CD4-positive, alpha-beta T cell (primary cell): ENCODE measurements at regions of chr2 and their contacts with region 1.

Region 1: DNA sequence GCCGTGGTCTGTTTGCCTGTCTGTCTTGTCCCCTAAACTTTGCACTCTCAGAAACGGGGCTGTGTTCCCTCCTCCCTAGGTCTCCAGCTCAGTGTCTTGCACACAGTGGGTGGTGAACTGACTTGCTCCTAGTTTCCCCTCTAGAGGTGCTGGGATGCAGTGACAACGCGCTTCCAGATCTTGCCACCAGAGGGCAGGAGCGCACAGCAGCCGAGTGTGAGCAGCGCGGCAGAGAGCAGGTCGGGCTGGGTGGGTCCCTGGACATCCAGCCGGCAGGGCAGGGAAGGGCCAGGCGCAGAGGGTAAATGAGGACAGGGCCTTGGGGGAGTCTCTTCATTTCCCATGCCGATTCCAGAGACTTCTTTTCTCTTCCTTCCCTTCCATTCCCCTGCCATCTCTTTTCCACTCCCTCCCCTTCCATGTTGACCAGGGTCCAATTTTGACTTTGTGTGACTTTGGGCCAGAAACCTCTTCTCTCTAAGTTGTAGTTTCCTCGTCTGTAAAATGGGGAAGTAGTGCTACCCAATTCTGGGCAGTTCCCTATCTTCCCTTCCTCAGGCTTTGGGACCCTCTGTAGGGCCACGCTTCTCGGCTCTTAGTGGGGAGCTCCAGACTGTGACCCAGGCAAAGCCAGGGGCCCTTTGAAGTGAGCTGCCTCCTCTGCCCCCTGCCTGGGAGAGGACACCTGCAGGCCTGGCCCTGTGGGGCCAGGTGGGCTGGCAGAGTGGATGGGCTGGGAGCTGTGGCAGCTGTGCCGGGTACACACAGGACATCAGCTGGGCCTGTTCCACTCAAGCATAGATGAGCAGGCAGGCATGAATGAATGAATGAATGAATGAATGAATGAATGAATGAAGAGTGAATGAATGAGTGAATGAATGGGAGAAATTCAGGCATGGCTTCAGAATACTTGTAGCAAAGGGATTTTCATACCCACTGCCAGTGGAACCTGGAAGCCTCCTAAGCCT is 43.3 kb upstream of the TAF1B start:
- DNase-seq: peak; percentile 69 to 91 (median 82)
- ATAC-seq: peak; percentile 90
- H3K4me3 ChIP-seq: peak overlapping the region; percentile 28
- H3K4me3 Mint-ChIP-seq: peak overlapping the region; percentile 82
- H3K27ac ChIP-seq: peak overlapping the region; percentile 20 to 31
- H3K27ac Mint-ChIP-seq: no peak overlapping the region
- H3K4me1 ChIP-seq: peaks cover 46% of the 10 kb centered on the region
- H3K4me1 Mint-ChIP-seq: peaks cover 17% of the 10 kb centered on the region
- H3K27me3 ChIP-seq: no peaks in the 10 kb centered on the region
- H3K27me3 Mint-ChIP-seq: peaks cover 5% of the 10 kb centered on the region
- CTCF ChIP-seq: peak; percentile 97

Region 2: DNA sequence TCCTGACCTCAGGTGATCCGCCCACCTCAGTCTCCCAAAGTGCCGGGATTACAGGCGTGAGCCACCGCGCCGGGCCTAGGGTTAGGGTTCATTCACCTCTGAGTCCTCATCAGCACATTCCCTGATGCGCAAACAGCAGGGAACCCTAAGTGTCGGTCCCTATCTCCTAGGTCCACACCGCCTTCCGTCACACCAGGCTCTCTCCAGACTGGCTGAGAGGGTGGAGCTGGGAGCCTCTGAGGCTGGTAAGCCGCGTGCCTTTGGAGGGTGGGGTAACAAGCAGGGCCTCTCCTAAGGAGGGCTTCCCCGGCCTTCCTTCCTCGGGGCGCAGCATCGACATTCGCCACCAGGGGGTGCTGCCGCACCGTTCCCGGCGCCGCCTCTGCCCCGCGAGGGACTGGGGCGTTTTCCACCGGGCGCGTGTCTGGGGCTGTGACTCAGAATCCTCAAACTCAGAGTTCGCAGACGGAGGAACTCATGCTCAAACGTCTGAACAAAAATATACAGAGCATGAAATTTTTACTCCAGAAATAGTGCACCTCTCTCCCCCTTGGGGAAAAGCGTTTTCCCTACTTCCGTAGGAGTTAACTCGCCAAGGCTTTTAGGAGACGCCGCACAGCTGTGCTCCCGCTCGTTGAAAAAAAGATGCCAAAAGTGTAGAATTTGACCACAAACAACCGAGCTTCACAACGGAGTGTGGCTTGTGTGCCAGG is 657.2 kb before region 1 on chr2:
- CTCF ChIA-PET with region 1: no interaction called
- POLR2A ChIA-PET with region 1: no interaction called
- intact Hi-C with region 1: loop called (anchors 5 kb)
- DNase-seq: peak; percentile 50 to 83 (median 70)
- ATAC-seq: peak; percentile 95
- H3K4me3 ChIP-seq: peak overlapping the region; percentile 20
- H3K4me3 Mint-ChIP-seq: no peak overlapping the region
- H3K27ac ChIP-seq: no peak overlapping the region
- H3K27ac Mint-ChIP-seq: no peak overlapping the region
- H3K4me1 ChIP-seq: peaks cover 7% of the 10 kb centered on the region
- H3K4me1 Mint-ChIP-seq: peaks cover 5% of the 10 kb centered on the region
- H3K27me3 ChIP-seq: peaks cover 0 to 6% of the 10 kb centered on the region in 2 experiments
- H3K27me3 Mint-ChIP-seq: peaks cover 39% of the 10 kb centered on the region
- CTCF ChIP-seq: peak; percentile 87

Region 3: GRCh38 chr2:9770308-9771100 is 29.4 kb before region 1 on chr2:
- CTCF ChIA-PET with region 1: interaction called, 11 read pairs
- POLR2A ChIA-PET with region 1: no interaction called
- intact Hi-C with region 1: no loop called
- DNase-seq: peak; percentile 23 to 78 (median 45)
- ATAC-seq: peak; percentile 60
- H3K4me3 ChIP-seq: no peak overlapping the region
- H3K4me3 Mint-ChIP-seq: no peak overlapping the region
- H3K27ac ChIP-seq: no peak overlapping the region
- H3K27ac Mint-ChIP-seq: no peak overlapping the region
- H3K4me1 ChIP-seq: peaks cover 22% of the 10 kb centered on the region
- H3K4me1 Mint-ChIP-seq: peaks cover 5% of the 10 kb centered on the region
- H3K27me3 ChIP-seq: no peaks in the 10 kb centered on the region
- H3K27me3 Mint-ChIP-seq: no peaks in the 10 kb centered on the region
- CTCF ChIP-seq: peak; percentile 39

Region 4: GRCh38 chr2:9782197-9782719 is 17.7 kb before region 1 on chr2:
- CTCF ChIA-PET with region 1: interaction called, 10 read pairs
- POLR2A ChIA-PET with region 1: no interaction called
- intact Hi-C with region 1: loop called in 1 of 2 experiments (anchors 2 kb)
- DNase-seq: peak; percentile 40 to 94 (median 64)
- ATAC-seq: peak; percentile 78
- H3K4me3 ChIP-seq: peak overlapping the region; percentile 22
- H3K4me3 Mint-ChIP-seq: peak overlapping the region; percentile 61
- H3K27ac ChIP-seq: peak overlapping the region; percentile 62 to 95
- H3K27ac Mint-ChIP-seq: peak overlapping the region; percentile 87
- H3K4me1 ChIP-seq: peaks cover 75% of the 10 kb centered on the region
- H3K4me1 Mint-ChIP-seq: peaks cover 57% of the 10 kb centered on the region
- H3K27me3 ChIP-seq: no peaks in the 10 kb centered on the region
- H3K27me3 Mint-ChIP-seq: no peaks in the 10 kb centered on the region
- CTCF ChIP-seq: no peak

Region 5: GRCh38 chr2:9813312-9814133 is 13.6 kb after region 1 on chr2:
- CTCF ChIA-PET with region 1: interaction called, 12 read pairs
- POLR2A ChIA-PET with region 1: no interaction called
- intact Hi-C with region 1: no loop called
- DNase-seq: peak; percentile 40 to 82 (median 60)
- ATAC-seq: peak; percentile 83
- H3K4me3 ChIP-seq: no peak overlapping the region
- H3K4me3 Mint-ChIP-seq: no peak overlapping the region
- H3K27ac ChIP-seq: no peak overlapping the region
- H3K27ac Mint-ChIP-seq: no peak overlapping the region
- H3K4me1 ChIP-seq: peaks cover 10% of the 10 kb centered on the region
- H3K4me1 Mint-ChIP-seq: peaks cover 25% of the 10 kb centered on the region
- H3K27me3 ChIP-seq: no peaks in the 10 kb centered on the region
- H3K27me3 Mint-ChIP-seq: peaks cover 4% of the 10 kb centered on the region
- CTCF ChIP-seq: peak; percentile 86

Region 6: DNA sequence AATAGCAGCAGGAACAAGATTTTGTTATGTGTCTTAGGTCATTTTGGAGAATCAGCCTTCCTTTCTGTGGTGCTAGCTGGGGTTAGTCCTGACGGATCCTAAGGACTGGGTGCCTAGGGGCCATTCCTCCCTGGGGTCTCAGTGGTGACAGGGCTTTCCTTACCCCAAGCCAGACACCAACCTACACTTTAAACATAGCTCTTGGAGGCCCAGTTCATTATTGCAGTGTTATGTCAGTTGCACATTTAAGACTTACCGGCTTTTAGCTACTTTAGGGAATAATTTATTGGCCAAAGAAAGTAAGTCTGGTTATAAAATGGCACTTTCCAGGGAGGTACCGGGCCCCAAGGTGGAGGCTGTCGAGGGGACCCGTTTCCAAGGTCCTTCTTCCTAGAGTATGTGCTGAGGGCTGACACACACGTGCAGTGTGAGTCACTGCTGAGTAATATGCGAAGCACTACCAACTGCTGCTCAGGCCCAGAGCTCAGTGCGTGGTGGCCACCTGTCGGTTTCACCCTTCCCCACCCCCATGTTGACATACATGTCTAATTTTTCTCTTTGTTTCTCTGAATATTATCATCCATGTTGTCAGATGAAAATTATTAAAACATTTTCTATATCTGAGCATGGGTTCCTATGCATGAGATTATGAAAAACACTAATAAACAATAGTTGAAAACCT is 114.6 kb after region 1 on chr2:
- CTCF ChIA-PET with region 1: no interaction called
- POLR2A ChIA-PET with region 1: no interaction called
- intact Hi-C with region 1: no loop called
- DNase-seq: peak in 2 of 14 experiments; percentile 13 to 22
- ATAC-seq: no peak
- H3K4me3 ChIP-seq: no peak overlapping the region
- H3K4me3 Mint-ChIP-seq: no peak overlapping the region
- H3K27ac ChIP-seq: no peak overlapping the region
- H3K27ac Mint-ChIP-seq: no peak overlapping the region
- H3K4me1 ChIP-seq: no peaks in the 10 kb centered on the region
- H3K4me1 Mint-ChIP-seq: no peaks in the 10 kb centered on the region
- H3K27me3 ChIP-seq: no peaks in the 10 kb centered on the region
- H3K27me3 Mint-ChIP-seq: no peaks in the 10 kb centered on the region
- CTCF ChIP-seq: no peak

Region 7: GRCh38 chr2:10812362-10813162 is 1012.6 kb after region 1 on chr2 and contains the start of gene PDIA6:
- CTCF ChIA-PET with region 1: no interaction called
- POLR2A ChIA-PET with region 1: no interaction called
- intact Hi-C with region 1: no loop called
- DNase-seq: peak; percentile 89 to 96 (median 92)
- ATAC-seq: peak; percentile 90
- H3K4me3 ChIP-seq: peak within 1 kb of the TSS; percentile 70
- H3K4me3 Mint-ChIP-seq: peak within 1 kb of the TSS; percentile 93
- H3K27ac ChIP-seq: peak within 1 kb of the TSS in 1 of 2 donors; percentile 31
- H3K27ac Mint-ChIP-seq: peak within 1 kb of the TSS; percentile 90
- H3K4me1 ChIP-seq: peaks cover 32% of the 10 kb centered on the region
- H3K4me1 Mint-ChIP-seq: peaks cover 34% of the 10 kb centered on the region
- H3K27me3 ChIP-seq: no peaks in the 10 kb centered on the region
- H3K27me3 Mint-ChIP-seq: peaks cover 2% of the 10 kb centered on the region
- CTCF ChIP-seq: no peak
- total RNA-seq, gene PDIA6: 25.5 to 26.3 TPM